Activated CD4-positive, alpha-beta memory T cell treated with anti-CD3 and anti-CD28 coated beads, Interleukin-2, amount 10 ng/mL, durations not matched to agents 7 days and 5 days (primary cell): ENCODE measurements at regions of chr6 and their contacts with region 1.

Region 1: GRCh38 chr6:41200296-41200900 is 551 bp downstream of the TREML2 start:
- DNase-seq: peak; percentile 77
- H3K4me3 Mint-ChIP-seq: peak overlapping the region; percentile 67
- H3K27ac Mint-ChIP-seq: peak overlapping the region; percentile 95
- H3K4me1 Mint-ChIP-seq: peaks cover 67% of the 10 kb centered on the region
- H3K27me3 Mint-ChIP-seq: no peaks in the 10 kb centered on the region

Region 2: DNA sequence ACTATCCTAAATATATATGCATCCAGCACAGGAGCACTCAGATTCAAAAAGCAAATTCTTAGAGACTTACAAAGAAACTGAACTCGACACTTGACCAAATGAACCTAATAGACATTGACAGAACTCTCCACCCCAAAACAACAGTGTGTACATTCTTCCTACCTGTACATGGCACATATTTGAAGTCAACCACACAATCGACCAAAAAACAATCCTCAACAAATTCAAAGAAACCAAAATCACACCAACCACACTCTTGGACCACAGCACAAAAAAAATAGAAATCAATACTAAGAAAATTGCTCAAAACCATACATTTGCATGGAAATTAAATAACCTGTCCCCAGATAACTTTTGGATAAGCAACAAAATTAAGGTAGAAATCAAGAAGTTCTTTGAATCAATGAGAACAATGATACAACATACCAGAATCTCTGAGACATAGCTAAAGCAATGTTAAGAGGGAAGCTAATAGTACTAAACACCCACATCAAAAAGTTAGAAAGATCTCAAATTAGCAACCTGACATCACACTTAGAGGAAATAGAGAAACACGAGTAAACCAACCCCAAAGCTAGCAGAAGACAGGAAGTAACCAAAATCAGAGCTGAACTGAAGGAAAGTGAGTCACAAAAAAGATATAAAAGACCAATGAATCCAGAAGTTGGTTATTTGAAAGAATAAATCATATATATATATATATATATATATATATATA is 98.5 kb after region 1 on chr6:
- CTCF ChIA-PET with region 1: interaction called, 3 read pairs
- POLR2A ChIA-PET with region 1: interaction called, 10 read pairs
- DNase-seq: no peak
- H3K4me3 Mint-ChIP-seq: peak overlapping the region; percentile 5
- H3K27ac Mint-ChIP-seq: peak overlapping the region; percentile 77
- H3K4me1 Mint-ChIP-seq: peaks cover 35% of the 10 kb centered on the region
- H3K27me3 Mint-ChIP-seq: peaks cover 25% of the 10 kb centered on the region